ENCODE measurements at regions of chr1 and their contacts with region 1.

Region 1: GRCh38 chr1:11979851-11980675 is at the start of gene MFN2:
- DNase-seq: peak; percentile 89 to 99 (median 93)

Region 2: DNA sequence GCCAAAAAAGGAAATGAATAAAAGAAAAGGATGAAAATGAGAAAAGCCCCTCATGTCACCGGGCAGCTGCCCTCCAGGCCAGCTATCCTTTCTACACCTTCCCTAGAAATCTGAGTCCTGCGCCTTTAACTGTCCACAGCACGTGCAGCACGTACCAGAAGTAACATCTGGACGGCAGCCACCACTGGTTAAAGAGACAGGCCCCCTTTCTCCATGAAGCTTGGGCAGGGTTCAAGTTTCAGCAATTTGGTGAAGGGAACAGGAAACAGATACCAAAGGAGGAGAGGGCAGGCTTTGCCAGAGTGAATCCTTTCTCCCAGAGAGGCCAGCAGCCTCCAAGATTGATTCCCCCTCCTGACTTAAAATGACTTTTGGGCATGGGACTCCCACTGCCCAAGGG is 50.2 kb before region 1 on chr1:
- intact Hi-C with region 1: loop called (anchors 5 kb)
- DNase-seq: peak in 5 of 10 donors; percentile 43 to 84 (median 48)

Region 3: DNA sequence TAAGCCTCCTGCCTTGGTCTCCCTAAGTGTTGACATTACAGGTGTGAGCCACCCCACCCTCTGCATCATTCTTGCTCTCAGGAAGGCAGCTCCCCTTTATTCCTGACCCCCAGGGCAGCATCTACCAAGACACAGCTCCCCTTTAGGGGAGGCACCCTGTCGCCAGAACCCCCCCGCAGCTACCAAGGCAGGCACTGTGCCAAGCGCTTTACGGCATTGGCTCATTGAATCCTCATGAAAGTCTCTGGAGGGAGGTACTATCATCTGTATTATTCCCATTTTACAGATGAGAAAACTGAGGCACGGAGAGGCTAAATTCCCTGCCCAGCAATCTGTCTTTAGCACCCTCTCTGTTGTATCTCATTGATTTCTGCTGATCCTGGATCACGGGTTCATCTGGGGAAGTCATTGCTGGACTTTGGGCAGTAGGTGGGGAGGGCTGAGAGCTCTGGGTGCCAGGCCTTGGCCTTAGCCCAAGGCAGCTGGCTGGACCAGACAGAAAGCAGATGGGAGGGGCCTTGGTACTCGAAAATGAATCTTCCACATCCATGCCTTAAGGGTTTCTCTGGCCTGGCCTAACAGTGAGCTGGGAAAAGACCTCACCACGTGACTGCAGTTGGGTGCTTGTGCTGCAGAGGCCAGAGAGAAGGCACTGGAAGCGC is 39.7 kb before region 1 on chr1:
- intact Hi-C with region 1: loop called (anchors 5 kb)
- DNase-seq: peak in 9 of 10 donors; percentile 41 to 94 (median 64)